ENCODE measurements at regions of chr11 and their contacts with region 1.

Region 1: DNA sequence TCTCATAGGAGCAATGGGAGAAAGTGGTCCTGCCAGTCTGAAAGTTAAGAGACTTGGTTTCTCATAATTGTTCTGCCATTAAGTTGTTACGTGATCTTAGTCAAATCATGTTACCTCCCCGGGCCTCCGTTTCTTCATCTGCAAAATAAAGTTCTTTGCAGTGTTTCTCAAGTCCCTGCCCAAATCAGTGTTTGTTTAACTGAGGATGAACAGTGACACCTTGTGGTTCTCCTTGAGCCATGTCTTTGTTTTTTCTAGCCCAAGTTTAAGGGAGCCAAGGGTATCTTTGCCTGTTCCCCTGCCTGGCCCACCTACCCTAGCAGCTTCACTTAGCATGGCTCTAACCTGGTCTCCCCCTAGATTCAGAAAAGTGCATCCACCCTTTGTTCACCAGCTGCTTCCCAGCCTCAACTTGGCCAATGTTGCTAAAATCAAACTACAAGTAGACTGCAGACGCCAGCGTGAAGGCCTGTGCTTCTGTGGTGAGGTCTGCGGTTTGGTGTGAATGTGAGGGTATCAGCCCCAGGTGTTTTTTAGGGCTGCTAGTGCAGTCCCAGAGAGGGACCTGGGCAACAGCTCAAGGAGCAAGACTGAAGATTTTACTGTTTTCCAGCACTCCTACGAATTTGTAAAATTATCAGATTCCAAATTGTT is 35.5 kb downstream of the FZD4 start:
- DNase-seq: peak; percentile 60 to 77
- H3K4me3 ChIP-seq: no peak overlapping the region
- H3K4me3 Mint-ChIP-seq: no peak overlapping the region
- H3K27ac Mint-ChIP-seq: no peak overlapping the region
- H3K4me1 ChIP-seq: peaks cover 32% of the 10 kb centered on the region
- H3K4me1 Mint-ChIP-seq: peaks cover 30% of the 10 kb centered on the region
- H3K27me3 ChIP-seq: no peaks in the 10 kb centered on the region
- H3K27me3 Mint-ChIP-seq: no peaks in the 10 kb centered on the region
- CTCF ChIP-seq: peak; percentile 91 to 95

Region 2: DNA sequence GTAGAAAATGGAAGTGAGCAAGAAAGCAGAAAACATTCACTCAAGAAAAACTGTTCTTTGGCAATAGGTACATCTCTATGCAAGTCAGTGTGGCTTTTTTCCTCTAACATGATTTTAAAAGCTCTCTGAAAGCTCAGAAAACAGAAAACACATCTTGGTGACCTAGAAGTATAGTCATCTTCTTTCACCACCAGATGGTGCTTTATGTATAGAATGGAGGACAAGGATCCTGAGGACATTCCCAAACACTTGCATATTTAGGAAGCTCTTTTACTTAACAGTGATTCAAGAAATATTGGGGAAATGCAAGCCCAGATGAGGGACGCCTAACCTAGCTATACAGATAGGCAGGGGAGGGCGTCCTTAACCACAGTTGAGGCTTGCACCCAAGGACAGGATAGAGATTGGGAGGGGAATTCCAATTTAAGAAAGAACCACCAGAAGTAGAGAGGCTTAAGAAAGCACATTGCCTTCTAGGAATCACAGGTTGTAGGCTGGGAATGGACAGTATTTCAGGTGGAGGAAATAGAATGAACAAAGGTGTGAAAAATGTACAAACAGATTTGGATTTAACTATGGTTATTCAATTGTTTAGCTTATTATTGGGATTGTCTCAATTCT is 558.8 kb before region 1 on chr11:
- CTCF ChIA-PET with region 1: interaction called, 4 read pairs
- POLR2A ChIA-PET with region 1: no interaction called
- intact Hi-C with region 1: loop called (anchors 2 kb)
- DNase-seq: peak in 1 of 2 experiments; percentile 47
- H3K4me3 ChIP-seq: no peak overlapping the region
- H3K4me3 Mint-ChIP-seq: no peak overlapping the region
- H3K27ac Mint-ChIP-seq: no peak overlapping the region
- H3K4me1 ChIP-seq: no peaks in the 10 kb centered on the region
- H3K4me1 Mint-ChIP-seq: no peaks in the 10 kb centered on the region
- H3K27me3 ChIP-seq: no peaks in the 10 kb centered on the region
- H3K27me3 Mint-ChIP-seq: no peaks in the 10 kb centered on the region
- CTCF ChIP-seq: peak; percentile 71 to 78

Region 3: DNA sequence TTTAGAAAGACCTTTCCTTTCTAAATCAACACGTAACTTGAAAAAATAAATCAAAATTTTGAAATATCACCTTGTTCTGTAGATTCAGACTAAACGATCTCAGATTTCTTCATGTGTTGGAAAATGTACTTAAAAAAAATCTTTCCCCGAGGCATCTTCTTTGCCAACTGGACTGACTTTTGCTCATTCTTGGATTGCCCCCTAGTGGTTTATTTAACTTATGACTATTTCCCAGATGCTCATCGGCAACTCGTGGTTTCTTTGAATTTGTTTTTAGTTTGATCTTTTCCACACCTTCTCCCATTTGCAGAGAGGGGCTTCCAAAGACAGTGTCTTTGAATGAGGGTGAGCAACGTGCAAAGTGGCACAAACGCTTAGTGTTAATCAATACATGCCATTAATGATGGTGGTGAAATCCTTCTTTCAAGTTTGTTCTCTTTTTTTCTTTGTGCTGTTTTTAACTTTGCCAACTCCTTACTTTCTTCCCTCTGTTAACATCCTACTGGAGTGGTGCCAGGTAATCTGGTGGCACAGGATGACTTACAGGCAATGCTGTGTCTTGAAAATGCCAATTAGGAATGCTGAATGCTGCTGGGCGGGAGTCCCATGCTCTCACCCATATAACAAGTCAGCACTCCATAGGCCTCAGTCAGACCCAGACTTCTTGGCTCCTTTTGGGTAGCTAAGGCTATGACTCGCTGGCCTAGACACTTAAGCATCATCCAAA is 101.1 kb before region 1 on chr11:
- CTCF ChIA-PET with region 1: no interaction called
- POLR2A ChIA-PET with region 1: no interaction called
- intact Hi-C with region 1: loop called (anchors 1 kb)
- DNase-seq: peak in 1 of 2 experiments; percentile 74
- H3K4me3 ChIP-seq: no peak overlapping the region
- H3K4me3 Mint-ChIP-seq: no peak overlapping the region
- H3K27ac Mint-ChIP-seq: peak overlapping the region; percentile 23
- H3K4me1 ChIP-seq: peaks cover 52% of the 10 kb centered on the region
- H3K4me1 Mint-ChIP-seq: peaks cover 41% of the 10 kb centered on the region
- H3K27me3 ChIP-seq: no peaks in the 10 kb centered on the region
- H3K27me3 Mint-ChIP-seq: no peaks in the 10 kb centered on the region
- CTCF ChIP-seq: peak; percentile 83 to 95

Region 4: DNA sequence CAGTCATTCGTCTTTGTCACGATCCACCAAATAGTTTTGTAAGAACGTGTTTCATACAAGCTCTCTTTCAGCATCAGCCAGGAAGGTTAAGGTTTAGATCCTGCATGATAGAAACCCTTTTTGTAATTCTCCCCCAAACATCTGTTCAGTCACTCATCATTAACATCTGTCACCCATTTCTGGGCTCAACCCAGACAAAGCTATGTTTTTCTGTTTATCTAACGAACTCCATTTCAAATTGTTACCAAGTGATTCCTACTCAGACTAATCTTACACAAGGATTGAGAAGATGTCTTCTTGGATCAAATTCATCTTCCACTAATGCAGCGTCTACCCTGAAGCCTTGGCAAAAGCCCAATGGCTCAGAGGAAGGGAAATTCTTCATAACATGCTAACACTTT is 23.2 kb before region 1 on chr11:
- CTCF ChIA-PET with region 1: no interaction called
- POLR2A ChIA-PET with region 1: no interaction called
- intact Hi-C with region 1: loop called (anchors 1 kb)
- DNase-seq: no peak
- H3K4me3 ChIP-seq: no peak overlapping the region
- H3K4me3 Mint-ChIP-seq: no peak overlapping the region
- H3K27ac Mint-ChIP-seq: no peak overlapping the region
- H3K4me1 ChIP-seq: peaks cover 33% of the 10 kb centered on the region
- H3K4me1 Mint-ChIP-seq: peaks cover 42% of the 10 kb centered on the region
- H3K27me3 ChIP-seq: no peaks in the 10 kb centered on the region
- H3K27me3 Mint-ChIP-seq: no peaks in the 10 kb centered on the region
- CTCF ChIP-seq: no peak

Region 5: GRCh38 chr11:87421422-87421821 is 501.7 kb after region 1 on chr11:
- CTCF ChIA-PET with region 1: interaction called, 6 read pairs
- POLR2A ChIA-PET with region 1: no interaction called
- intact Hi-C with region 1: loop called (anchors 5 kb)
- DNase-seq: peak; percentile 73 to 81
- H3K4me3 ChIP-seq: no peak overlapping the region
- H3K4me3 Mint-ChIP-seq: no peak overlapping the region
- H3K27ac Mint-ChIP-seq: no peak overlapping the region
- H3K4me1 ChIP-seq: no peaks in the 10 kb centered on the region
- H3K4me1 Mint-ChIP-seq: no peaks in the 10 kb centered on the region
- H3K27me3 ChIP-seq: no peaks in the 10 kb centered on the region
- H3K27me3 Mint-ChIP-seq: no peaks in the 10 kb centered on the region
- CTCF ChIP-seq: peak; percentile 85 to 91

Measured in Caco-2 (cell line).